Endothelial cell of umbilical vein (primary cell): ENCODE measurements at regions of chr1 and their contacts with region 1.

Region 1: GRCh38 chr1:17606826-17607440 is 67.4 kb downstream of the ARHGEF10L start:
- DNase-seq: peak; percentile 48
- H3K4me3 ChIP-seq: no peak overlapping the region
- H3K27ac ChIP-seq: no peak overlapping the region
- H3K4me1 ChIP-seq: no peaks in the 10 kb centered on the region
- H3K27me3 ChIP-seq: no peaks in the 10 kb centered on the region
- CTCF ChIP-seq: peak; percentile 86 to 94
- POLR2A ChIP-seq: no peak

Region 2: GRCh38 chr1:17494114-17494729 is 112.7 kb before region 1 on chr1:
- CTCF ChIA-PET with region 1: interaction called, 136 read pairs
- POLR2A ChIA-PET with region 1: no interaction called
- dilution Hi-C with region 1: no loop called
- intact Hi-C with region 1: loop called (anchors 1 kb)
- DNase-seq: peak; percentile 42
- H3K4me3 ChIP-seq: no peak overlapping the region
- H3K27ac ChIP-seq: no peak overlapping the region
- H3K4me1 ChIP-seq: no peaks in the 10 kb centered on the region
- H3K27me3 ChIP-seq: no peaks in the 10 kb centered on the region
- CTCF ChIP-seq: peak; percentile 93
- POLR2A ChIP-seq: no peak

Region 3: GRCh38 chr1:17507916-17508315 is 99.0 kb before region 1 on chr1:
- CTCF ChIA-PET with region 1: interaction called, 374 read pairs
- POLR2A ChIA-PET with region 1: interaction called, 3 read pairs
- dilution Hi-C with region 1: no loop called
- intact Hi-C with region 1: no loop called
- DNase-seq: no peak
- H3K4me3 ChIP-seq: no peak overlapping the region
- H3K27ac ChIP-seq: no peak overlapping the region
- H3K4me1 ChIP-seq: no peaks in the 10 kb centered on the region
- H3K27me3 ChIP-seq: no peaks in the 10 kb centered on the region
- CTCF ChIP-seq: peak in 1 of 2 donors; percentile 3
- POLR2A ChIP-seq: no peak

Region 4: DNA sequence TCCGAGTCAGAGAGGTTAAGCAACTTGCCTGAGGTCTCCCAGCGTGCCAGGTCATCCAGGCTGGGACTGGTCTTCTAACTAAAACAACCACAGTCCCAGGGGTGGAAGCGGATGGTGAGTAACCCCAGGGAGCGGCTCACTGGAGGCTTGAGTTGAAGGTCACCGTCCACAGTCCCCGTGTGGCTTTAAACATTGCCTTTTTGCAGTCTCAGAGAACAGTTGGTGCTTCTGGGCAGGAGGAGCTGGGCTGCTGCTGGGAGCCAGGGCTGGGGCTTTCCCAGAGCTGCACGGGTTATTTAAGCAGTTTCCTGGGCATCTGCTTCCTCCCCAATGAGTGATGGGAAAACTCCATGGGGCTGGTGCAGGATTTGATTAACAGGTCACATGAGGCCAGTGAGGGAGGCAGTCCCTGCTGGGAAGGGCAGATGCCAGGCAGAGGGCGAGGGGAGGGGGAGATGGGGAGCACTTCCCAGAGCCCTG is 55.1 kb before region 1 on chr1:
- CTCF ChIA-PET with region 1: interaction called, 11 read pairs
- POLR2A ChIA-PET with region 1: no interaction called
- dilution Hi-C with region 1: no loop called
- intact Hi-C with region 1: no loop called
- DNase-seq: peak; percentile 31
- H3K4me3 ChIP-seq: no peak overlapping the region
- H3K27ac ChIP-seq: no peak overlapping the region
- H3K4me1 ChIP-seq: no peaks in the 10 kb centered on the region
- H3K27me3 ChIP-seq: no peaks in the 10 kb centered on the region
- CTCF ChIP-seq: no peak
- POLR2A ChIP-seq: no peak

Region 5: GRCh38 chr1:17587989-17588685 is 18.8 kb before region 1 on chr1:
- CTCF ChIA-PET with region 1: interaction called, 31 read pairs
- POLR2A ChIA-PET with region 1: no interaction called
- dilution Hi-C with region 1: no loop called
- intact Hi-C with region 1: no loop called
- DNase-seq: no peak
- H3K4me3 ChIP-seq: no peak overlapping the region
- H3K27ac ChIP-seq: no peak overlapping the region
- H3K4me1 ChIP-seq: no peaks in the 10 kb centered on the region
- H3K27me3 ChIP-seq: no peaks in the 10 kb centered on the region
- CTCF ChIP-seq: no peak
- POLR2A ChIP-seq: no peak

Region 6: DNA sequence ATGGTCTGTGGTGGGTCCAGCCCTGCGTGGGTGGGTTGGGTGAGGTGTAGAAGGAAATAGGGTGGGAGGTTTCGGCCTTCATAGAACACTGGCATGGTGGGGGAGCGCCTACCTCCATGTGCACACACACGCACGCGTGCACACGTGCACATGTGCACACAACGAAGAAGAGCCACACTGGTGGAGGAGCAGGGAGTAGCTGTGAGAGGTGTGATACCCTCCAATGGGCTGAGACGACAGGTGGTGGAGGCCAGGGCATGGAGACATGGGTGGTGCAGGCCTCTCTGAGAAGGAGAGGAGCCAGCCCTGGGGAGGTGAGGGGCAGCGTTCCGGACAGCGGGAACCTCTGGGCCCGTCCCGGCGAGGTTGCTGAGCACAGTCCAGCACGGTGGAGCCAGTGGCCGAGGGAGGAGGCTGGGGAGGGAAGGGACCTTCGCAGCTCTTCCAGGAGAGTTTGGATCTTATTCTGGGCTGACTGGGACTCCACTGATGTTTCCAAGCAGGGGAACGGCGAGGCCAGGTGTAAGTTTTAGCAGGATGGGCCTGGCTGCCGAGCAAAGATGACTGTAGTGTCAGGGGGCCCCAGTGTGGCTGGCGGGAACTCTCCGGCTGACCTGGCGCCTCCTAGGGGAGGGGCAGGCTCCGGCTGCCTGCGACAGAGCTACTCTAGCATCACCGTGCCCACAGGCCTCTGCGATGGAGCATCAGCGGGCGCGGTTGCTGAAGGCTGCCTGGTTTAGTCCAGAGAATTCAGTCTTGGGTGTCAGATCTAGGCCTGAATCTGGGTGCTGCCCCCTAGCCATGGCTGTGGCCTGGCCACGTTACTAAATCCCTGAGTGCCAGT is 39.7 kb after region 1 on chr1:
- CTCF ChIA-PET with region 1: no interaction called
- POLR2A ChIA-PET with region 1: no interaction called
- dilution Hi-C with region 1: no loop called
- intact Hi-C with region 1: no loop called
- DNase-seq: no peak
- H3K4me3 ChIP-seq: no peak overlapping the region
- H3K27ac ChIP-seq: no peak overlapping the region
- H3K4me1 ChIP-seq: no peaks in the 10 kb centered on the region
- H3K27me3 ChIP-seq: no peaks in the 10 kb centered on the region
- CTCF ChIP-seq: no peak
- POLR2A ChIP-seq: no peak

Region 7: GRCh38 chr1:17671741-17672140 is 64.8 kb after region 1 on chr1:
- CTCF ChIA-PET with region 1: no interaction called
- POLR2A ChIA-PET with region 1: no interaction called
- dilution Hi-C with region 1: no loop called
- intact Hi-C with region 1: no loop called
- DNase-seq: no peak
- H3K4me3 ChIP-seq: no peak overlapping the region
- H3K27ac ChIP-seq: no peak overlapping the region
- H3K4me1 ChIP-seq: no peaks in the 10 kb centered on the region
- H3K27me3 ChIP-seq: no peaks in the 10 kb centered on the region
- CTCF ChIP-seq: no peak
- POLR2A ChIP-seq: no peak

Region 8: GRCh38 chr1:18077657-18078215 is 470.8 kb after region 1 on chr1:
- CTCF ChIA-PET with region 1: no interaction called
- POLR2A ChIA-PET with region 1: no interaction called
- dilution Hi-C with region 1: no loop called
- intact Hi-C with region 1: no loop called
- DNase-seq: no peak
- H3K4me3 ChIP-seq: no peak overlapping the region
- H3K27ac ChIP-seq: no peak overlapping the region
- H3K4me1 ChIP-seq: no peaks in the 10 kb centered on the region
- H3K27me3 ChIP-seq: no peaks in the 10 kb centered on the region
- CTCF ChIP-seq: no peak
- POLR2A ChIP-seq: no peak

Region 9: DNA sequence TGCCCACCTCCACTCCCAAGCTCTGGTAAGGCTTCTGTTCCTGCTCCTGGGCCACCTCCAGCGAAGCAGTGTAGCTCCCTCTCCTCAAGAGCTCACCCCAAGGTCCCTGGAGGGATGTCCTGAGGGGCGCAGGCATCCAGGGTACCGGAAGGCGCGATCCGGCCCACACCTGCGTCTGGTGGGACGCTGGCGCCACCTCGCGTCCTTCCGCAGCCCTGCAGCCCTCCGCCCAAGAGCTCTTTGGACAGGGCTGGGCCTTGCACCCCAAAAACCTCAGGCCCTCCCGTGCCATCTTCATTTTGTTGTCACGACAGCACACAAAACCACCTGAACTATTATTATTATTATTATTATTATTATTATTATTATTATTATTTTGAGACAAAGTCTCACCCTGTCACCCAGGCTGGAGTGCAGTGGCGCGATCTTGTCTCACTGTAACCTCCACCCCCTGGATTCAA is 974.5 kb after region 1 on chr1:
- CTCF ChIA-PET with region 1: interaction called, 10 read pairs
- POLR2A ChIA-PET with region 1: no interaction called
- dilution Hi-C with region 1: no loop called
- intact Hi-C with region 1: no loop called
- DNase-seq: peak; percentile 8
- H3K4me3 ChIP-seq: no peak overlapping the region
- H3K27ac ChIP-seq: no peak overlapping the region
- H3K4me1 ChIP-seq: no peaks in the 10 kb centered on the region
- H3K27me3 ChIP-seq: no peaks in the 10 kb centered on the region
- CTCF ChIP-seq: peak; percentile 68 to 84
- POLR2A ChIP-seq: no peak